ENCODE measurements at regions of chr3 and their contacts with region 1.

Region 1: DNA sequence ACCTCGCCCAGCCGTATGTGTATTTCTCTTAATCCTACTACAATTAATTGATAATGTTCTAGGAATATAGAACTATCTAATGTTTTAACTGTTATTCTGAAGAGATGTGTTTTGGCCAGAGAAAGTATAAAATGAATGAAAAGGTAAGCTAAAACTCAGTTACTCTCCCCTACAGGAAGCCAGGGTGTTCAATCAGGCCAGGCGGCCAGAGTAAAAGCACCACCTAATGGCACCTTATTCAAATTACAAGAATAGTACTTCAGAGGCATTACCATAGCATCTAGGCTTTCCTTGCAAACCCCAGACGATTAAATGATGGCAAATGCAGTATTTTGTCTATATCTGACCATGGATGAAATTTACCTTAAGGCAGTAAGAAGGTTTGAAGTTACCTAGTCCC is 10.4 kb downstream of the SLC12A8 start:
- DNase-seq: no peak
- ATAC-seq: peak; percentile 66
- H3K4me3 ChIP-seq: no peak overlapping the region
- H3K27ac ChIP-seq: no peak overlapping the region
- H3K4me1 ChIP-seq: peaks cover 15% of the 10 kb centered on the region
- H3K27me3 ChIP-seq: no peaks in the 10 kb centered on the region
- CTCF ChIP-seq: peak; percentile 30 to 49 (median 39); a peak in 4 of 6 replicates
- EP300 ChIP-seq: no peak
- POLR2A ChIP-seq: no peak
- RAD21 ChIP-seq: peak; percentile 72

Region 2: GRCh38 chr3:124935264-124935663 is 266.9 kb before region 1 on chr3:
- CTCF ChIA-PET with region 1: interaction called, 13 read pairs
- POLR2A ChIA-PET with region 1: interaction called, 3 read pairs
- RAD21 ChIA-PET with region 1: no interaction called
- SMC1A ChIA-PET with region 1: interaction called, 4 read pairs
- in situ Hi-C with region 1: no loop called
- intact Hi-C with region 1: no loop called
- DNase-seq: no peak
- ATAC-seq: peak; percentile 89
- H3K4me3 ChIP-seq: no peak overlapping the region
- H3K27ac ChIP-seq: no peak overlapping the region
- H3K4me1 ChIP-seq: no peaks in the 10 kb centered on the region
- H3K27me3 ChIP-seq: no peaks in the 10 kb centered on the region; a peak in 1 of 4 replicates
- CTCF ChIP-seq: no peak
- EP300 ChIP-seq: no peak
- POLR2A ChIP-seq: no peak
- RAD21 ChIP-seq: no peak

Region 3: DNA sequence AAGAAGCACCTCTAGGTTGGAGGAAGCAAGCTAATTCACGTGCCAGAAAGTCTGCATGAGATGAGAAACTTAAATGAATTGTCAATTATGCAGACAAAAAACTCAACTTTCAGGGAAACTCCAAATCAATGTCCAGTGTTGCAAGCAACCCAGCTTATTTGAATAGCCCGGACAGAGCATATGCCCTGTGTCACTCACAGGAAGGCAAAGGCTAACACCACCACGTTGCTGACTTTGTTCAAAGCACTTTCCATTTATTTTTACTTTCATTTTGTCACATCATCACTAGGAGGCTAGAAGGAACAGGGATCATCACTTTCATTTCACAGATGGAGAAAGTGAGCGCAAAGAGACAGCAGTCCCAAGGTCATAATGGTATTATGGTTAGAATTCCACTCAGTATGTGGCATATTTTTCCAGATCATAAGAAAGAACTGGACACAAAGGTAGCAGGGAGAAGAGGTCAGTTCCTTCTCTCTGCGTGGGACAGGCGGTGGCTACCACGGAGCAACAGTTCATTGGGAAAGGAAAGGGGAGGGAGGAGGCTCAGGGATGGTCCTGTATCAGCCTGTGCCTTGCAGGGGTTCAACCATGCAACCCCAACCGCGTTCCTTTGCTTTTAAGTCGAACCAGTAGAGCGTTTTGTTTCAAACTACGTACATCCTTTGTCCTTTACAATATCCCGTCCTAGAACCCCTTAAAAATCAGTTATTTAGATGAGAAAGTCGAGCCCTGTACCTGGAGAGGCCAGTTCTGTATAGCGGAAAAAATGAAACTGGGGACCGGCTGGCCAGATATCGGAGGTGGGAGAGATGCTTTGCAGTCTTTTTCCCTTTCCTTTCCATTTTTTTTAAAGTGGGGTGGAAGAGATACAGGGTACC is 147.5 kb before region 1 on chr3:
- CTCF ChIA-PET with region 1: interaction called, 3 read pairs
- POLR2A ChIA-PET with region 1: no interaction called
- RAD21 ChIA-PET with region 1: interaction called, 13 read pairs
- SMC1A ChIA-PET with region 1: interaction called, 10 read pairs
- in situ Hi-C with region 1: no loop called
- intact Hi-C with region 1: loop called (anchors 5 kb)
- DNase-seq: peak; percentile 62
- ATAC-seq: peak; percentile 61
- H3K4me3 ChIP-seq: peak overlapping the region; percentile 93
- H3K27ac ChIP-seq: peak overlapping the region; percentile 81
- H3K4me1 ChIP-seq: peaks cover 26% of the 10 kb centered on the region
- H3K27me3 ChIP-seq: no peaks in the 10 kb centered on the region
- CTCF ChIP-seq: no peak
- EP300 ChIP-seq: no peak
- POLR2A ChIP-seq: no peak
- RAD21 ChIP-seq: no peak

Region 4: GRCh38 chr3:125119752-125120378 is 82.3 kb before region 1 on chr3:
- CTCF ChIA-PET with region 1: interaction called, 3 read pairs
- POLR2A ChIA-PET with region 1: no interaction called
- RAD21 ChIA-PET with region 1: interaction called, 15 read pairs
- SMC1A ChIA-PET with region 1: interaction called, 5 read pairs
- in situ Hi-C with region 1: no loop called
- intact Hi-C with region 1: no loop called
- DNase-seq: peak; percentile 87
- ATAC-seq: peak; percentile 80
- H3K4me3 ChIP-seq: peak overlapping the region; percentile 60
- H3K27ac ChIP-seq: peak overlapping the region; percentile 97
- H3K4me1 ChIP-seq: peaks cover 76% of the 10 kb centered on the region
- H3K27me3 ChIP-seq: no peaks in the 10 kb centered on the region
- CTCF ChIP-seq: no peak
- EP300 ChIP-seq: peak; percentile 18 to 68; a peak in 1 of 4 replicates
- POLR2A ChIP-seq: no peak; the same call in 1 of the 2 replicates
- RAD21 ChIP-seq: no peak

Region 5: GRCh38 chr3:125150525-125151441 is 51.4 kb before region 1 on chr3:
- CTCF ChIA-PET with region 1: interaction called, 5 read pairs
- POLR2A ChIA-PET with region 1: no interaction called
- RAD21 ChIA-PET with region 1: interaction called, 6 read pairs
- SMC1A ChIA-PET with region 1: interaction called, 4 read pairs
- in situ Hi-C with region 1: no loop called
- intact Hi-C with region 1: loop called (anchors 1 kb)
- DNase-seq: no peak
- ATAC-seq: peak; percentile 57
- H3K4me3 ChIP-seq: no peak overlapping the region
- H3K27ac ChIP-seq: no peak overlapping the region
- H3K4me1 ChIP-seq: peaks cover 55% of the 10 kb centered on the region
- H3K27me3 ChIP-seq: no peaks in the 10 kb centered on the region
- CTCF ChIP-seq: peak; percentile 49 to 80 (median 70)
- EP300 ChIP-seq: no peak
- POLR2A ChIP-seq: no peak
- RAD21 ChIP-seq: peak; percentile 70

Region 6: DNA sequence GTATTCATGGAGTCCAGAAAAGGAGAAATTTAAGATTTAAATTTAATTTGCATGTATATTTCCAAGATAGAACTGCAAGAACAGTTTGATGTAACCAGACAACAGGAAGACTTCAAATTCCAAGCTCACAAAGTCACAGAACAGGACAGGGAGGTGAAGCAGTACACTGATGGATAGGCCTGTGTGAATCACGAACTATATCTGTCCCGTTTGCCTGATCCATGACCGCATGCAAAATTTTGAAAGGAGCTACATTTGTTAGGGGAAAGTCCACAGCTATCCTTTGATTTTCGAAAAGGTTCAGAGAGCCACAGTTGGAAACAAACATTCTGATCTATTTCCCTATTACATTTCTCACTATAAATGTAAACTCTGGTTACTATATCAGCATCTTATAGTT is 89.8 kb after region 1 on chr3:
- CTCF ChIA-PET with region 1: no interaction called
- POLR2A ChIA-PET with region 1: no interaction called
- RAD21 ChIA-PET with region 1: no interaction called
- SMC1A ChIA-PET with region 1: no interaction called
- in situ Hi-C with region 1: no loop called
- intact Hi-C with region 1: no loop called
- DNase-seq: no peak
- ATAC-seq: no peak
- H3K4me3 ChIP-seq: no peak overlapping the region
- H3K27ac ChIP-seq: no peak overlapping the region
- H3K4me1 ChIP-seq: no peaks in the 10 kb centered on the region
- H3K27me3 ChIP-seq: no peaks in the 10 kb centered on the region
- CTCF ChIP-seq: no peak
- EP300 ChIP-seq: no peak
- POLR2A ChIP-seq: no peak
- RAD21 ChIP-seq: no peak